Activated B cell treated with CpG ODN at 0.5 μM for 24 hours (primary cell): ENCODE measurements at regions of chr9 and their contacts with region 1.

Region 1: GRCh38 chr9:82271106-82271561 is 282.6 kb downstream of the SPATA31D1 start:
- DNase-seq: no peak
- ATAC-seq: no peak
- H3K4me3 Mint-ChIP-seq: no peak overlapping the region
- H3K27ac Mint-ChIP-seq: no peak overlapping the region
- H3K4me1 Mint-ChIP-seq: no peaks in the 10 kb centered on the region
- H3K27me3 Mint-ChIP-seq: no peaks in the 10 kb centered on the region
- CTCF ChIP-seq: no peak

Region 2: GRCh38 chr9:82148901-82149461 is 122.2 kb before region 1 on chr9:
- CTCF ChIA-PET with region 1: no interaction called
- POLR2A ChIA-PET with region 1: no interaction called
- intact Hi-C with region 1: no loop called
- DNase-seq: no peak
- ATAC-seq: no peak
- H3K4me3 Mint-ChIP-seq: no peak overlapping the region
- H3K27ac Mint-ChIP-seq: no peak overlapping the region
- H3K4me1 Mint-ChIP-seq: peaks cover 4% of the 10 kb centered on the region
- H3K27me3 Mint-ChIP-seq: no peaks in the 10 kb centered on the region
- CTCF ChIP-seq: no peak

Region 3: GRCh38 chr9:82332018-82332773 is 61.1 kb after region 1 on chr9:
- CTCF ChIA-PET with region 1: no interaction called
- POLR2A ChIA-PET with region 1: no interaction called
- intact Hi-C with region 1: loop called (anchors 10 kb)
- DNase-seq: no peak
- ATAC-seq: no peak
- H3K4me3 Mint-ChIP-seq: no peak overlapping the region
- H3K27ac Mint-ChIP-seq: no peak overlapping the region
- H3K4me1 Mint-ChIP-seq: no peaks in the 10 kb centered on the region
- H3K27me3 Mint-ChIP-seq: no peaks in the 10 kb centered on the region
- CTCF ChIP-seq: no peak